ENCODE measurements at regions of chr3 and their contacts with region 1.

Region 1: GRCh38 chr3:184513276-184514170 is 48.1 kb upstream of the EPHB3 start:
- DNase-seq: peak; percentile 85 to 88
- ATAC-seq: peak; percentile 96 to 100 (median 98)
- H3K4me3 ChIP-seq: peak overlapping the region in 9 of 10 donors; percentile 22 to 57 (median 52)
- H3K27ac ChIP-seq: peak overlapping the region in 6 of 10 donors; percentile 29 to 69 (median 54)
- H3K4me1 ChIP-seq: peaks cover 0 to 23% (median 10%) of the 10 kb centered on the region in 9 donors
- H3K27me3 ChIP-seq: peaks cover 0 to 68% (median 51%) of the 10 kb centered on the region in 7 donors
- CTCF ChIP-seq: peak; percentile 78 to 94 (median 87)

Region 2: DNA sequence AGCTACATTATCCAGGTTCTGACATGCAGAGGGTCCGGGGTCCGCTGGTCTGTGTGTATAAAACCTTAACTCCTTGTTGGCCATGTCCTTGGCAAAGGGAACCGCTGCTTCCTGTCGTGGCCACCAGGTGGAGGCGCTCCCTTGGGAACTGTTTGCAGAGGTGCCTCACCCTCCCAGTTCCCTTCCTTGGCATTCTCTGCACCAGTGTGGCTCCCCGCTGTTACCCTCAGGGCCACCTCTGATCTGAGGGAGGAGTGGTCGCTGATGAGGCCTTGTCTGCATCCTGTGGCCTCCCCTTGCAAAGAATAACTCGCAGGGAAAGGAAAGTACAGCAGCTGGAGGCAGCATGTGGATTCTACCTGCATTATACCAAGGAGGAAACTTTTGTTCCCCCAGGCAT is 44.1 kb before region 1 on chr3:
- intact Hi-C with region 1: loop called in 1 of 10 experiments (anchors 5 kb)
- DNase-seq: no peak
- ATAC-seq: no peak
- H3K4me3 ChIP-seq: no peak overlapping the region
- H3K27ac ChIP-seq: no peak overlapping the region
- H3K4me1 ChIP-seq: peaks cover 6 to 40% (median 14%) of the 10 kb centered on the region in 9 donors
- H3K27me3 ChIP-seq: peaks cover 0 to 14% (median 0%) of the 10 kb centered on the region in 7 donors
- CTCF ChIP-seq: peak in 6 of 9 donors; percentile 25 to 50 (median 32)

Region 3: GRCh38 chr3:185049710-185050109 is 536.2 kb after region 1 on chr3:
- intact Hi-C with region 1: no loop called
- DNase-seq: no peak
- ATAC-seq: no peak
- H3K4me3 ChIP-seq: no peak overlapping the region
- H3K27ac ChIP-seq: no peak overlapping the region
- H3K4me1 ChIP-seq: peaks cover 0 to 25% (median 23%) of the 10 kb centered on the region in 9 donors
- H3K27me3 ChIP-seq: no peaks in the 10 kb centered on the region
- CTCF ChIP-seq: no peak

Measured in heart right ventricle (tissue), 16 donors.